ENCODE measurements at regions of chr14 and their contacts with region 1.

Region 1: GRCh38 chr14:55088356-55088755 is 36.9 kb downstream of the MAPK1IP1L start:
- DNase-seq: no peak
- ATAC-seq: no peak
- H3K4me3 Mint-ChIP-seq: no peak overlapping the region
- H3K27ac Mint-ChIP-seq: no peak overlapping the region
- H3K4me1 Mint-ChIP-seq: peaks cover 2% of the 10 kb centered on the region
- H3K27me3 Mint-ChIP-seq: no peaks in the 10 kb centered on the region

Region 2: GRCh38 chr14:55019968-55020554 is 68.3 kb before region 1 on chr14:
- CTCF ChIA-PET with region 1: no interaction called
- POLR2A ChIA-PET with region 1: no interaction called
- intact Hi-C with region 1: no loop called
- DNase-seq: no peak
- ATAC-seq: no peak
- H3K4me3 Mint-ChIP-seq: no peak overlapping the region
- H3K27ac Mint-ChIP-seq: no peak overlapping the region
- H3K4me1 Mint-ChIP-seq: peaks cover 16% of the 10 kb centered on the region
- H3K27me3 Mint-ChIP-seq: no peaks in the 10 kb centered on the region

Region 3: DNA sequence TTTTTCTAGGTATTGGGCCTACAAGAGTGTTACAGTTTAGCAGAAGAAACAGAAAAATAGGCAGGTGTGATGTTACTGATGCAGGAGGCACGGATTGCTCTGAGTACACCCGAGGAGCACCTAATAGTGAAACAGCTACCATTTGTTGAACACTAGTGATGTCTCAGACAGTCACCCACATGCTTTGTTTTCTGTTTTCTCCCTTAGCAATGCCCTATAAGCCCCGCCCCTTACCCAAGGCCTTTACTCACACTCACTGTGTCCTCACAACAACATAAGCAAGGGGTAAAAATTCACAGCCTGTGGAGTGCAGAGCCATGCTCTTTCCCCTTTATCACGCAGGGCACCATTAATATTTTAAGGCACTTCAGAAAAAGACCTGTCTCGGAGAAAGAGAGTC is 11.2 kb before region 1 on chr14:
- CTCF ChIA-PET with region 1: interaction called, 23 read pairs
- POLR2A ChIA-PET with region 1: interaction called, 3 read pairs
- intact Hi-C with region 1: no loop called
- DNase-seq: peak; percentile 53
- ATAC-seq: peak; percentile 84
- H3K4me3 Mint-ChIP-seq: no peak overlapping the region
- H3K27ac Mint-ChIP-seq: no peak overlapping the region
- H3K4me1 Mint-ChIP-seq: peaks cover 20% of the 10 kb centered on the region
- H3K27me3 Mint-ChIP-seq: no peaks in the 10 kb centered on the region